ENCODE measurements at regions of chr1 and their contacts with region 1.

Region 1: DNA sequence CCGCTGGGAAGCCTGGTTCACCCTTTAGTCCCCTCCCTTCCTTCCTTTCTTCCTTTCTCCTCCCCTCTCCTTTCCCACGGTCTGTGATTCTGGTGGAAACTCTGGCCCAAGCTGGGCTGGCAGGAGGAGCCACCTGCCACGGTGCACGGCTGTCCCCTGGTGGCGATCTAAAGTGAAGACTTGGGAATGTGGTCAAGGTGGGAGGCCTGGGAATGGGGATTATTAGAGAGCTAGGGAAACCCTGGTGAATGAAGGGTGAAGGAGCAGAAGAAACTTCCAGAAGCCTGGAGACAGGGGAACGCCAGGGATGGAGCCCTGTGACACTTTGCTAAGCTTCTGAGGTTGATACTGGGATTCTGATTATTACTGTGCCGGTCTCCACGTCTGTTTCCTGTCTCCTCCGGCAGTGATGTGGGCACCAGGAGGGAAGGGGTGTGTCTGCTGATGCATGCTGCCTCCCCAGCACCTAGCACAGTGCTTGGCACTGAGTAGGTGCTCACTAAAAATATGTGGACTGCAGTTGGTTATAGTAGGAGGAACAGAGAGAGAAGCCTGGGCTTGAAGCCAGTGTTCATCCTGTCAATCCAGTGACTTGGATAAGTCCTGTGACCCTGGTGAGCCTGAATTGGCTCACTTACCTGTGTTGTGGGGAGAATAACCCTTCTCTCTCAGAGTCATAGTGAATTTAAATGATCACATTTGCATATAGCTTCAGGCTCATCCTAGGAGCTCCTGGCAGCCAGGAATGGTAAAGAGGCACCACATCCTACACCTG is 71.2 kb upstream of the NBPF3 start:
- DNase-seq: peak; percentile 81
- ATAC-seq: peak; percentile 92 to 95
- H3K4me3 ChIP-seq: no peak overlapping the region
- H3K27ac ChIP-seq: no peak overlapping the region
- H3K4me1 ChIP-seq: peaks cover 7% of the 10 kb centered on the region
- H3K27me3 ChIP-seq: no peaks in the 10 kb centered on the region
- CTCF ChIP-seq: peak; percentile 98

Region 2: DNA sequence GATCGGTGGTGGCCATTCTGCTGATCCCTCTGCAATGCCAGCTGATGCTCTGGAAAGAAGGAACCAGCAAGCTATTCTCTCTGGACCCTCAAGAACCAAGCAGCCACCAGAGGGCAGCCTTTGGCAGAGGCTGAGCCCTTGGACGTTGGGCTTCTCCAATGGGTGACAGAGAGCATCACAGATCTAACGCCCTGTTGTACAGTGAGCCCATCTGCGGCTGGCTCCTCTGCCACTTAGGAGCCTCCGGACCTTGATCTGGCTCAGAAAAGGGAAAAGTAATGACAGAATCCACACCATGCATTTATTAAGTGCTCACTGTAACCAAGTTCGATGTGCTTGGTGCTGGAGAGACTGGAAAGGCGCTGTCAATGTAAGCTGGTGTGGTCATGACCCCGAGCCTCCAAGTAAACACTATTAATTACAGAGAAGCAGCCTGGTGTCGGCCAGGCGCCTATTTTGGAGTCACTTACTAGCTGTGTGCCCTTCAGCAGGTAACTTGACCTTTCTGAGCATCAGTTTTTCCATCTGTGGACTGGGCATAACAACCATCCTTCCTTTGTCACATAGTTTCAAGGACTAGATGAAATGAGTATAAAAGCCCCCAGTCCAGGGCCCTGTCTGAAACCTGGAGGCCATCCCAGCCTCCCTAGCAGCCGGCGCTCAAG is 113.3 kb before region 1 on chr1:
- intact Hi-C with region 1: loop called (anchors 10 kb)
- DNase-seq: peak; percentile 90
- ATAC-seq: peak; percentile 89 to 90
- H3K4me3 ChIP-seq: no peak overlapping the region
- H3K27ac ChIP-seq: no peak overlapping the region
- H3K4me1 ChIP-seq: peaks cover 34% of the 10 kb centered on the region
- H3K27me3 ChIP-seq: no peaks in the 10 kb centered on the region
- CTCF ChIP-seq: peak; percentile 89

Region 3: GRCh38 chr1:21490774-21491553 is 122.3 kb after region 1 on chr1:
- intact Hi-C with region 1: no loop called
- DNase-seq: no peak
- ATAC-seq: peak; percentile 54 to 63
- H3K4me3 ChIP-seq: no peak overlapping the region
- H3K27ac ChIP-seq: no peak overlapping the region
- H3K4me1 ChIP-seq: no peaks in the 10 kb centered on the region
- H3K27me3 ChIP-seq: no peaks in the 10 kb centered on the region
- CTCF ChIP-seq: peak; percentile 37